ENCODE measurements at regions of chr3 and their contacts with region 1.

Region 1: DNA sequence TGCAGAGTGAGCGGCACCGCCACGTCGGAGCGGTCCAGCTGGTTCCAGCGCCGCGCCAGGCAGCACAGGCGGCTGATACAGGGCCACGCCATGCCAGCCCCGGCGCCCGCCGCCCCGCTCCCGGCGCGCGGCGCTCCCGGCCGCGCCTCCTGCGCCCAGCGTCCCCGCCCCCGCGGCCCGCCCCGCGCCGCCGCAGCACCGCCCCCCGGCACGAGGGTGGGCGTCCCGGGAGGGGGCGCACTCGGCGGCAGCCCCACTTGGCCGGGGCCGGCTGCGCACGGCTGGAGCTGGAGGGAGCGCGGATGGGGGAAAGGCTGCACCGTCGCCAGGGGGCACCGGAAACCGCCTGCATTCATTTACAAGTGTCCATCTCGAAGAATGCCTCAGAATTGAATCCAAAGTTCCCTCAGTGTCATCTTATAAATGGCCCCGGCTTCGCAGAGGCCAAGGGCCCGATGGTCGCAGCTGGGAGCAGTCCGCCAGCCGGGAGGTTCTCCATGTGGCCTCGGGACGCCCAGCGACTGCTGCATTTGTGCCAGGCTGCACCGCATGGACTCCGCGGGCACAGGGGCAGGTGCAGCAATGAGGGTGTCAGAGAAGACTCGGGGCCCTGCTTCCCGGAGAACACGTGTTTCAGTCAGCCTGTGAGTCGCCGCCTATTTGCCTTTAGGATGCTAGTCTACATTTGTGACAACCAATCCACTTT is at the start of gene MAP6D1:
- DNase-seq: peak in 1 of 2 experiments; percentile 72
- H3K4me3 ChIP-seq: peak within 1 kb of the TSS; percentile 59; the same call in 1 of the 2 replicates
- H3K27ac ChIP-seq: no peak within 1 kb of the TSS
- H3K4me1 ChIP-seq: 0 out of 2 replicates have a peak, but pooled peaks cover 7% of the 10 kb centered on the region
- H3K27me3 ChIP-seq: no peaks in the 10 kb centered on the region
- CTCF ChIP-seq: no peak; the same call in 1 of the 2 replicates
- total RNA-seq, gene MAP6D1: 2.2 TPM in 2 replicates

Region 2: DNA sequence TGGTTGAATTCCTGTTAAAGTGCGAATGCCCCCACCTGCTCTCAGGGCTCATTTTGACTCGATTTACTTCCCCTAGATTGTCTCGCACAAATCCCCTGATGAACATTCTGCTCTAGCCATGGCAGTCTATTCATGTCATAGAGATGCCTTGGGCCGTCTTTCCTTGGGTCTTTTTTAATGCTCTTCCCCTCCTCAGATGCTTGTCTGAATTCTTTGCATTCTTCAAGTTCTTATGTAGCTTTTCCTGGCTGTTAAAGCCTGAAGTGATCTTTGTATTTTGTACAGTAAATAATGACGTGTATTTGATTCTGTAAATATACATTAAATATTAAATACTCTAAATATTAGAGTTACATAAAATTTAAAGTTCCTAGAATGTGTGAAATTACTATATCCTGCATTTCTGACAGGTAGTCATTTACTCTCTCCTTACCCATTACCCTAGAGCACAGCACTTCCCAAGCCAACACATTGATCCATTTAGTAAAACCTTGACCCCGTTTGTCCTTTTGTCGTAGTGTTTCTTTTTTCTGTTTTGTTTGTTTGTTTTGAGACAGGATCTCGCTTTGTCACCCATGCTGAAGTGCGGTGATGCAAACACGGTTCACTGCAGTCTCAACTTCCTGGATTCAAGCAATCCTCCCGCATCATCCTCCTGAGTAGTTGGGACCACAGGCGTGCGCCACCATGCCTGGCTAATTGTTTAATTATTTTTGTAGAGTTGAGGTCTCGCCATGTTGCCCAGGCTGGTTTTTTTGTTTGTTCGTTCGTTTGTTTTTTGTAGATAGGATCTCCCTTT is 80.1 kb before region 1 on chr3:
- CTCF ChIA-PET with region 1: no interaction called
- POLR2A ChIA-PET with region 1: no interaction called
- intact Hi-C with region 1: no loop called
- DNase-seq: no peak
- H3K4me3 ChIP-seq: no peak overlapping the region
- H3K27ac ChIP-seq: no peak overlapping the region
- H3K4me1 ChIP-seq: no peaks in the 10 kb centered on the region
- H3K27me3 ChIP-seq: no peaks in the 10 kb centered on the region
- CTCF ChIP-seq: no peak

Region 3: DNA sequence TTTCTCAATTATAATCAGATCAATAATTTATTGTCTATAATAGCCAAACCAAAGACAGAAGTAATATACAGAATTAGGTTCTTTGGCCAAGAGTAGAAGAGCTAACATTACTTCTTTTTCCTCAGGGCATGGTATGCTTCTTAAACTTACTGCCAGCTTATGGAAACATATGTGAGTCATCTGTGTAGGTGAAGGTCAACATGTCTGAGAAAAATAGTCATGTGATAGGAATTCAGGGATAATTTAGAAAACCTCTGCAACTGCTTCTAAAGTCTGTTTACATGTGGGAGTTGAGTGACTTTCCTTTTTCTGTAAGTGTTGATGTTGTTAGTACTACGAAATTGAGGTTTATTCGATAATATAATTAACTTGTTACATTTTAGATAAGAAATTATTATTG is 19.0 kb after region 1 on chr3:
- CTCF ChIA-PET with region 1: interaction called, 4 read pairs
- POLR2A ChIA-PET with region 1: interaction called, 7 read pairs
- intact Hi-C with region 1: loop called (anchors 2 kb)
- DNase-seq: peak in 1 of 2 experiments; percentile 64
- H3K4me3 ChIP-seq: no peak overlapping the region
- H3K27ac ChIP-seq: no peak overlapping the region
- H3K4me1 ChIP-seq: peaks cover 13% of the 10 kb centered on the region
- H3K27me3 ChIP-seq: no peaks in the 10 kb centered on the region
- CTCF ChIP-seq: no peak

Region 4: DNA sequence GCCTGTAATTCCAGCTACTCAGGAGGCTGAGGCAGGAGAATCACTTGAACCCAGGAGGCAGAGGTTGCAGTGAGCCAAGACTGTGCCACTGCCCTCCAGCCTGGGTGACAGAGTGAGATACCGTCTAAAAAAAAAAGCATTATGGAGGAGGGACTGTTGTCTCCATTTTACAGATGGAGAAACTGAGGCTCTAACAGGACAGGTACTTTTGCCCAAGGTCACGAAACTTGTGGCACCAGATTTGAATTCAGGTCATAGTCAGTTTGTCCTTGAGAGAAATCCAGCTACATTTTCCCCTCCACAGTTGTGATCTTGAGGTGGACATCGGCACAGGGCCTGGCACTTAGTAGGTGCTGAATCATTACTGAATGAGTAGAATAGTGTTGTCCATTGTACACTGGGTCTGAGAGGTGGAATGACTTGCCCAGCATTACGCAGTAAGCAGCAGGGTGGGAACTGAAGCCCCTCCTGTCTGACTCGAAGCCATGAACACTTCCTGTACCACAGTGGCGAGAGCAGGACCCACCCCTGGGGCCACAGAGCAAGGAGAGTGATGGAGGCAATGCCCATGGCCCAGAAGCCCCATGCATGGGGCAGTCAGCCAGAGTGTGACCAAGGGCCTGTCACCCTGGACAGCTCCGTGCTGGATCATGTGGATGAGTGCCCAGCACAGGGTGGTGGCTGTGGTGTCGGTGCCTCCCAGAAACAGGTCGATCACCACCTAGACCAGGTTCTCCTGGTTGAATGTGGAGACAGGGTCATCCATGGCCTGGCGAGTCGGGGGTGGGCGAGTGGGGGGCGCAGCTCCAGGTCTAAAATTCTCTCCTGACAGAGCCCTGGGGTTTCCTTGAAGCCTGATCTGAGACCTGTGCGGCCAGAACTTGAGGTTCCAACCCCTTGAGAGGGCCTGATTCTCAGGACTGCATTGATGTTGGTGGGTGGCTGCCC is 79.5 kb after region 1 on chr3:
- CTCF ChIA-PET with region 1: interaction called, 11 read pairs
- POLR2A ChIA-PET with region 1: no interaction called
- intact Hi-C with region 1: no loop called
- DNase-seq: no peak
- H3K4me3 ChIP-seq: no peak overlapping the region
- H3K27ac ChIP-seq: no peak overlapping the region
- H3K4me1 ChIP-seq: no peaks in the 10 kb centered on the region
- H3K27me3 ChIP-seq: no peaks in the 10 kb centered on the region
- CTCF ChIP-seq: no peak

Region 5: GRCh38 chr3:184168363-184169120 is 342.9 kb after region 1 on chr3:
- CTCF ChIA-PET with region 1: no interaction called
- POLR2A ChIA-PET with region 1: no interaction called
- intact Hi-C with region 1: no loop called
- DNase-seq: no peak
- H3K4me3 ChIP-seq: no peak overlapping the region
- H3K27ac ChIP-seq: 0 out of 2 replicates have a peak overlapping the region, but pooled peaks have one; percentile 3
- H3K4me1 ChIP-seq: no peaks in the 10 kb centered on the region
- H3K27me3 ChIP-seq: no peaks in the 10 kb centered on the region
- CTCF ChIP-seq: no peak

Measured in PC-9 (cell line).